Breast epithelium (tissue), 4 donors: ENCODE measurements at regions of chr9 and their contacts with region 1.

Region 1: GRCh38 chr9:106953166-106953565 is 90.2 kb downstream of the ZNF462 start:
- DNase-seq: no peak
- H3K4me3 ChIP-seq: no peak overlapping the region
- H3K27ac ChIP-seq: no peak overlapping the region
- H3K4me1 ChIP-seq: no peaks in the 10 kb centered on the region
- H3K27me3 ChIP-seq: no peaks in the 10 kb centered on the region
- CTCF ChIP-seq: no peak
- POLR2A ChIP-seq: no peak

Region 2: GRCh38 chr9:106449336-106449927 is 503.7 kb before region 1 on chr9:
- intact Hi-C with region 1: loop called (anchors 10 kb)
- DNase-seq: no peak
- H3K4me3 ChIP-seq: no peak overlapping the region
- H3K27ac ChIP-seq: no peak overlapping the region
- H3K4me1 ChIP-seq: no peaks in the 10 kb centered on the region
- H3K27me3 ChIP-seq: no peaks in the 10 kb centered on the region
- CTCF ChIP-seq: no peak
- POLR2A ChIP-seq: no peak

Region 3: DNA sequence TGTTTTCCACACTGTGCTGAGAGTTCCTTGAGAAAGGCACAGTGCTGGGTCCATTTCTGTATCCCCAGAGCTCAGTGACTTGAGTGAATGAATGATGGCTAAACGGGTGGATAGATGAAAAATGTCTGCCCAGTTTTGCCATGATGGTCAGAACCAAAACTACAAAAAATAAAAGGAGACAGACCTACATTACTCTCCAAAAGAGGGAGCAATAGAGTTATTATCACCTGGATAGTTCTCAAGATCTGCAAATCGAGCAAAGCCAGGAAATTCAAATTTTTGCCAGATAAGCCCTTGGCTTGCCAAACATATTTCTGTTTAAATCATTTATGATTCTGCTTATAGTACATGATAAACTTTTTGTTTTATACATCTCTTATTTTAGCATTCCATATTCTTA is 304.4 kb before region 1 on chr9:
- intact Hi-C with region 1: no loop called
- DNase-seq: no peak
- H3K4me3 ChIP-seq: no peak overlapping the region
- H3K27ac ChIP-seq: no peak overlapping the region
- H3K4me1 ChIP-seq: no peaks in the 10 kb centered on the region
- H3K27me3 ChIP-seq: no peaks in the 10 kb centered on the region
- CTCF ChIP-seq: peak in 1 of 3 donors; percentile 17
- POLR2A ChIP-seq: no peak

Region 4: GRCh38 chr9:106936680-106937079 is 16.5 kb before region 1 on chr9:
- intact Hi-C with region 1: loop called (anchors 1 kb)
- DNase-seq: no peak
- H3K4me3 ChIP-seq: no peak overlapping the region
- H3K27ac ChIP-seq: no peak overlapping the region
- H3K4me1 ChIP-seq: no peaks in the 10 kb centered on the region
- H3K27me3 ChIP-seq: no peaks in the 10 kb centered on the region
- CTCF ChIP-seq: no peak
- POLR2A ChIP-seq: no peak

Region 5: DNA sequence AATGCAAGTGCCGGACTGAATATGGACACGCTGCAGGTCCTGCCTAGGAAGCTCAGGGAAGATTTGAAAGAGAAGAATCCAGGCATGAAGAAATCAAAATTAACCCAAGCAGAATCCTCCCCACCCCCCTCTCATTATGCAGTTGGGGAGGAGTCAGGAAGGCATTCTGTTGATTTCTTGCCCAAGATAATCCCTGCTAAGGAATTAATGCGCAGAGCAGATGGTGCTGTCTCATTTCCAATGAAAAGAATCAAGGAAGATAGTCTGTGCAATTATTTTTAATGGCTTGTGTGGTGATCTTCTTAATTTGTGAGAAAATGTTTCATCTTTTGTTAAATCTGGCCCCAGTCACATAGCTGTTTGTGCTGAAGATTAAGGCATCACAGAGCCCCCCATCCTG is 54.8 kb after region 1 on chr9:
- intact Hi-C with region 1: no loop called
- DNase-seq: no peak
- H3K4me3 ChIP-seq: no peak overlapping the region
- H3K27ac ChIP-seq: no peak overlapping the region
- H3K4me1 ChIP-seq: no peaks in the 10 kb centered on the region
- H3K27me3 ChIP-seq: no peaks in the 10 kb centered on the region
- CTCF ChIP-seq: no peak
- POLR2A ChIP-seq: no peak

Region 6: DNA sequence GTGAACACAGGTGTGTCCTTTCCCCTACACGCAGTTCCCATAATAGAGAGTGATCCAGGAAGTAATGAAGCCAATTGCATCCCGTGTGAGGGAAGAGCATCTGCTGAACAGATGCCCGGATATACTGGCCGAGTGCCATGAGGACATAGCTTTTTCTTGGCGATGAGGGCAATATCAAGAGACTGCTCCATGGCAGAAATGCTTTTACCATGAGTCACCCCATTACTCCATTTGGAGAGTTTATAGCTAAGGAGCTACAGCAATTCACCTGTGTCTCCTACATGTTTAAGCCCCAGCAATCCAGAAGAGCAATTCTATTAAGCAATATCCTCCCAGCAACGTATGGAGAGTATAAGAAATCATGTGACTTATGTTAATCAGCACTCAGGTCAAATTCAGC is 758.4 kb after region 1 on chr9:
- intact Hi-C with region 1: no loop called
- DNase-seq: peak in 1 of 2 donors; percentile 26
- H3K4me3 ChIP-seq: no peak overlapping the region
- H3K27ac ChIP-seq: peak overlapping the region; percentile 32 to 50
- H3K4me1 ChIP-seq: no peaks in the 10 kb centered on the region
- H3K27me3 ChIP-seq: no peaks in the 10 kb centered on the region
- CTCF ChIP-seq: no peak
- POLR2A ChIP-seq: no peak